Naive thymus-derived CD4-positive, alpha-beta T cell (primary cell): ENCODE measurements at regions of chr19 and their contacts with region 1.

Region 1: GRCh38 chr19:3984908-3985642 is at the start of gene EEF2:
- DNase-seq: peak; percentile 89 to 96 (median 93)
- ATAC-seq: peak; percentile 72
- H3K4me3 ChIP-seq: peak within 1 kb of the TSS; percentile 98
- H3K4me3 Mint-ChIP-seq: peak within 1 kb of the TSS; percentile 91 to 99 (median 98)
- H3K27ac ChIP-seq: peak within 1 kb of the TSS; percentile 87
- H3K27ac Mint-ChIP-seq: peak within 1 kb of the TSS; percentile 93 to 99 (median 96)
- H3K4me1 ChIP-seq: peaks cover 37 to 43% of the 10 kb centered on the region in 2 donors
- H3K4me1 Mint-ChIP-seq: peaks cover 30 to 57% (median 48%) of the 10 kb centered on the region in 7 donors
- H3K27me3 ChIP-seq: no peaks in the 10 kb centered on the region
- H3K27me3 Mint-ChIP-seq: no peaks in the 10 kb centered on the region
- total RNA-seq, gene EEF2: 1,791 to 2,674 (median 2,346) TPM

Region 2: GRCh38 chr19:3626473-3627350 is 358.4 kb before region 1 on chr19 and contains the start of gene CACTIN:
- CTCF ChIA-PET with region 1: no interaction called
- POLR2A ChIA-PET with region 1: no interaction called
- intact Hi-C with region 1: loop called in 1 of 2 experiments (anchors 5 kb)
- DNase-seq: peak; percentile 97 to 100 (median 99)
- ATAC-seq: peak; percentile 99
- H3K4me3 ChIP-seq: peak within 1 kb of the TSS; percentile 73
- H3K4me3 Mint-ChIP-seq: peak within 1 kb of the TSS; percentile 85 to 98 (median 94)
- H3K27ac ChIP-seq: peak within 1 kb of the TSS; percentile 81
- H3K27ac Mint-ChIP-seq: peak within 1 kb of the TSS; percentile 94 to 100 (median 99)
- H3K4me1 ChIP-seq: peaks cover 8 to 16% of the 10 kb centered on the region in 2 donors
- H3K4me1 Mint-ChIP-seq: peaks cover 23 to 43% (median 27%) of the 10 kb centered on the region in 7 donors
- H3K27me3 ChIP-seq: no peaks in the 10 kb centered on the region
- H3K27me3 Mint-ChIP-seq: no peaks in the 10 kb centered on the region
- total RNA-seq, gene CACTIN: 35.4 to 46.7 (median 37.1) TPM

Region 3: GRCh38 chr19:3931041-3931440 is 54.0 kb before region 1 on chr19:
- CTCF ChIA-PET with region 1: no interaction called
- POLR2A ChIA-PET with region 1: no interaction called
- intact Hi-C with region 1: no loop called
- DNase-seq: no peak
- ATAC-seq: no peak
- H3K4me3 ChIP-seq: no peak overlapping the region
- H3K4me3 Mint-ChIP-seq: no peak overlapping the region
- H3K27ac ChIP-seq: no peak overlapping the region
- H3K27ac Mint-ChIP-seq: no peak overlapping the region
- H3K4me1 ChIP-seq: no peaks in the 10 kb centered on the region
- H3K4me1 Mint-ChIP-seq: no peaks in the 10 kb centered on the region
- H3K27me3 ChIP-seq: no peaks in the 10 kb centered on the region
- H3K27me3 Mint-ChIP-seq: peaks cover 10 to 28% (median 11%) of the 10 kb centered on the region in 5 donors

Region 4: GRCh38 chr19:3942790-3943409 is 42.2 kb before region 1 on chr19:
- CTCF ChIA-PET with region 1: no interaction called
- POLR2A ChIA-PET with region 1: no interaction called
- intact Hi-C with region 1: no loop called
- DNase-seq: no peak
- ATAC-seq: no peak
- H3K4me3 ChIP-seq: no peak overlapping the region
- H3K4me3 Mint-ChIP-seq: no peak overlapping the region
- H3K27ac ChIP-seq: no peak overlapping the region
- H3K27ac Mint-ChIP-seq: no peak overlapping the region
- H3K4me1 ChIP-seq: no peaks in the 10 kb centered on the region
- H3K4me1 Mint-ChIP-seq: peaks cover 0 to 5% (median 0%) of the 10 kb centered on the region in 7 donors
- H3K27me3 ChIP-seq: no peaks in the 10 kb centered on the region
- H3K27me3 Mint-ChIP-seq: no peaks in the 10 kb centered on the region

Region 5: GRCh38 chr19:4065430-4066175 is 80.5 kb after region 1 on chr19:
- CTCF ChIA-PET with region 1: interaction called, 6 read pairs
- POLR2A ChIA-PET with region 1: interaction called, 17 read pairs
- intact Hi-C with region 1: loop called (anchors 1 kb)
- DNase-seq: peak; percentile 97 to 99 (median 98)
- ATAC-seq: peak; percentile 89
- H3K4me3 ChIP-seq: no peak overlapping the region
- H3K4me3 Mint-ChIP-seq: peak overlapping the region; percentile 29 to 90 (median 67)
- H3K27ac ChIP-seq: peak overlapping the region; percentile 95
- H3K27ac Mint-ChIP-seq: peak overlapping the region in 6 of 9 donors; percentile 12 to 86 (median 66)
- H3K4me1 ChIP-seq: peaks cover 41 to 56% of the 10 kb centered on the region in 2 donors
- H3K4me1 Mint-ChIP-seq: peaks cover under 1 to 42% (median 26%) of the 10 kb centered on the region in 7 donors
- H3K27me3 ChIP-seq: no peaks in the 10 kb centered on the region
- H3K27me3 Mint-ChIP-seq: no peaks in the 10 kb centered on the region

Region 6: GRCh38 chr19:4139614-4140236 is 154.7 kb after region 1 on chr19:
- CTCF ChIA-PET with region 1: interaction called, 16 read pairs
- POLR2A ChIA-PET with region 1: interaction called, 14 read pairs
- intact Hi-C with region 1: loop called (anchors 1 kb)
- DNase-seq: peak; percentile 64 to 92 (median 82)
- ATAC-seq: peak; percentile 96
- H3K4me3 ChIP-seq: no peak overlapping the region
- H3K4me3 Mint-ChIP-seq: peak overlapping the region in 9 of 10 donors; percentile 14 to 64 (median 30)
- H3K27ac ChIP-seq: no peak overlapping the region
- H3K27ac Mint-ChIP-seq: peak overlapping the region in 1 of 9 donors; percentile 32
- H3K4me1 ChIP-seq: peaks cover 0 to 6% of the 10 kb centered on the region in 2 donors
- H3K4me1 Mint-ChIP-seq: peaks cover 5 to 11% (median 10%) of the 10 kb centered on the region in 7 donors
- H3K27me3 ChIP-seq: no peaks in the 10 kb centered on the region
- H3K27me3 Mint-ChIP-seq: peaks cover 4 to 11% (median 6%) of the 10 kb centered on the region in 5 donors

Region 7: GRCh38 chr19:4246767-4247593 is 261.9 kb after region 1 on chr19 and contains the start of gene YJU2:
- CTCF ChIA-PET with region 1: no interaction called
- POLR2A ChIA-PET with region 1: interaction called, 4 read pairs
- intact Hi-C with region 1: loop called (anchors 1 kb)
- DNase-seq: peak; percentile 92 to 100 (median 99)
- ATAC-seq: peak; percentile 96
- H3K4me3 ChIP-seq: peak within 1 kb of the TSS; percentile 100
- H3K4me3 Mint-ChIP-seq: peak within 1 kb of the TSS; percentile 85 to 98 (median 96)
- H3K27ac ChIP-seq: peak within 1 kb of the TSS; percentile 99
- H3K27ac Mint-ChIP-seq: peak within 1 kb of the TSS; percentile 97 to 100 (median 99)
- H3K4me1 ChIP-seq: peaks cover 12 to 13% of the 10 kb centered on the region in 2 donors
- H3K4me1 Mint-ChIP-seq: peaks cover 10 to 33% (median 24%) of the 10 kb centered on the region in 7 donors
- H3K27me3 ChIP-seq: no peaks in the 10 kb centered on the region
- H3K27me3 Mint-ChIP-seq: peaks cover 0 to 2% (median 0%) of the 10 kb centered on the region in 5 donors
- total RNA-seq, gene YJU2: 28.5 to 42.1 (median 31.9) TPM

Region 8: GRCh38 chr19:4723367-4724187 is 738.5 kb after region 1 on chr19 and contains the start of gene DPP9:
- CTCF ChIA-PET with region 1: no interaction called
- POLR2A ChIA-PET with region 1: interaction called, 3 read pairs
- intact Hi-C with region 1: loop called in 1 of 2 experiments (anchors 5 kb)
- DNase-seq: peak; percentile 84 to 100 (median 99)
- ATAC-seq: peak; percentile 99
- H3K4me3 ChIP-seq: peak within 1 kb of the TSS; percentile 96
- H3K4me3 Mint-ChIP-seq: peak within 1 kb of the TSS; percentile 83 to 99 (median 95)
- H3K27ac ChIP-seq: peak within 1 kb of the TSS; percentile 87
- H3K27ac Mint-ChIP-seq: peak within 1 kb of the TSS; percentile 93 to 100 (median 98)
- H3K4me1 ChIP-seq: peaks cover 19 to 26% of the 10 kb centered on the region in 2 donors
- H3K4me1 Mint-ChIP-seq: peaks cover 21 to 48% (median 37%) of the 10 kb centered on the region in 7 donors
- H3K27me3 ChIP-seq: no peaks in the 10 kb centered on the region
- H3K27me3 Mint-ChIP-seq: peaks cover 0 to 10% (median 5%) of the 10 kb centered on the region in 5 donors
- total RNA-seq, gene DPP9: 71.2 to 90.7 (median 81.4) TPM